ENCODE measurements at regions of chr17 and their contacts with region 1.

Region 1: GRCh38 chr17:72397687-72398086 is 276.9 kb downstream of the SOX9 start:
- DNase-seq: no peak
- H3K4me3 ChIP-seq: no peak overlapping the region
- H3K4me3 Mint-ChIP-seq: peak overlapping the region; percentile 4
- H3K27ac Mint-ChIP-seq: peak overlapping the region; percentile 40
- H3K4me1 ChIP-seq: peaks cover 38% of the 10 kb centered on the region
- H3K4me1 Mint-ChIP-seq: peaks cover 27% of the 10 kb centered on the region
- H3K27me3 ChIP-seq: no peaks in the 10 kb centered on the region
- H3K27me3 Mint-ChIP-seq: no peaks in the 10 kb centered on the region
- CTCF ChIP-seq: no peak

Region 2: GRCh38 chr17:72126563-72127486 is 270.9 kb before region 1 on chr17:
- CTCF ChIA-PET with region 1: no interaction called
- POLR2A ChIA-PET with region 1: no interaction called
- intact Hi-C with region 1: loop called (anchors 1 kb)
- DNase-seq: peak in 1 of 2 experiments; percentile 30
- H3K4me3 ChIP-seq: no peak overlapping the region
- H3K4me3 Mint-ChIP-seq: no peak overlapping the region
- H3K27ac Mint-ChIP-seq: no peak overlapping the region
- H3K4me1 ChIP-seq: peaks cover 21% of the 10 kb centered on the region
- H3K4me1 Mint-ChIP-seq: peaks cover 19% of the 10 kb centered on the region
- H3K27me3 ChIP-seq: no peaks in the 10 kb centered on the region
- H3K27me3 Mint-ChIP-seq: no peaks in the 10 kb centered on the region
- CTCF ChIP-seq: no peak

Region 3: DNA sequence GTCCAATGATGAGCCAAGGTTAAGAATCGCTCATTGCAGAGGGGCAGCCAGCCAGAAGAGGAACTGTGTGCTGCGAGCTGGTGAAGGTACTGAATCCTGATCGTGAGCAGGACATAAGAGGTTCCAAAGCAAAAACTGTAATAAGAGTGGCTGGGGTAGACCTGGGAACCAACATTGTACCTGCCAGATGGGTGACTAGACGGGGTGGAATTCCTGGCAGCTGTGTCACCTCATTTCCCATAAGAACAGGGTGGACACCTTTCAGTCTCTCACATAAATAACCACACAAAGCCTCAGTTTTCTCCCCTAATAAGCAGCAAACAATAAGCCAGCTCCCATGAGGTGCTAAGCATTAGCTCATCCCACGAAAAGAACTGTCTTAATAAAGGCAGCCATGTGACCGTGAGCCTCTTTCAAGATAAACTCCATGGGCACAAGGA is 13.5 kb after region 1 on chr17:
- CTCF ChIA-PET with region 1: interaction called, 3 read pairs
- POLR2A ChIA-PET with region 1: no interaction called
- intact Hi-C with region 1: loop called (anchors 1 kb)
- DNase-seq: no peak
- H3K4me3 ChIP-seq: no peak overlapping the region
- H3K4me3 Mint-ChIP-seq: no peak overlapping the region
- H3K27ac Mint-ChIP-seq: peak overlapping the region; percentile 77
- H3K4me1 ChIP-seq: peaks cover 79% of the 10 kb centered on the region
- H3K4me1 Mint-ChIP-seq: peaks cover 50% of the 10 kb centered on the region
- H3K27me3 ChIP-seq: no peaks in the 10 kb centered on the region
- H3K27me3 Mint-ChIP-seq: no peaks in the 10 kb centered on the region
- CTCF ChIP-seq: no peak

Region 4: GRCh38 chr17:72421128-72422092 is 23.7 kb after region 1 on chr17:
- CTCF ChIA-PET with region 1: no interaction called
- POLR2A ChIA-PET with region 1: no interaction called
- intact Hi-C with region 1: loop called (anchors 2 kb)
- DNase-seq: peak; percentile 85 to 92
- H3K4me3 ChIP-seq: no peak overlapping the region
- H3K4me3 Mint-ChIP-seq: peak overlapping the region; percentile 29
- H3K27ac Mint-ChIP-seq: peak overlapping the region; percentile 97
- H3K4me1 ChIP-seq: peaks cover 43% of the 10 kb centered on the region
- H3K4me1 Mint-ChIP-seq: peaks cover 42% of the 10 kb centered on the region
- H3K27me3 ChIP-seq: no peaks in the 10 kb centered on the region
- H3K27me3 Mint-ChIP-seq: no peaks in the 10 kb centered on the region
- CTCF ChIP-seq: no peak

Region 5: GRCh38 chr17:72472106-72472505 is 74.4 kb after region 1 on chr17:
- CTCF ChIA-PET with region 1: no interaction called
- POLR2A ChIA-PET with region 1: no interaction called
- intact Hi-C with region 1: no loop called
- DNase-seq: no peak
- H3K4me3 ChIP-seq: no peak overlapping the region
- H3K4me3 Mint-ChIP-seq: no peak overlapping the region
- H3K27ac Mint-ChIP-seq: no peak overlapping the region
- H3K4me1 ChIP-seq: peaks cover 51% of the 10 kb centered on the region
- H3K4me1 Mint-ChIP-seq: peaks cover 11% of the 10 kb centered on the region
- H3K27me3 ChIP-seq: no peaks in the 10 kb centered on the region
- H3K27me3 Mint-ChIP-seq: no peaks in the 10 kb centered on the region
- CTCF ChIP-seq: no peak

Region 6: DNA sequence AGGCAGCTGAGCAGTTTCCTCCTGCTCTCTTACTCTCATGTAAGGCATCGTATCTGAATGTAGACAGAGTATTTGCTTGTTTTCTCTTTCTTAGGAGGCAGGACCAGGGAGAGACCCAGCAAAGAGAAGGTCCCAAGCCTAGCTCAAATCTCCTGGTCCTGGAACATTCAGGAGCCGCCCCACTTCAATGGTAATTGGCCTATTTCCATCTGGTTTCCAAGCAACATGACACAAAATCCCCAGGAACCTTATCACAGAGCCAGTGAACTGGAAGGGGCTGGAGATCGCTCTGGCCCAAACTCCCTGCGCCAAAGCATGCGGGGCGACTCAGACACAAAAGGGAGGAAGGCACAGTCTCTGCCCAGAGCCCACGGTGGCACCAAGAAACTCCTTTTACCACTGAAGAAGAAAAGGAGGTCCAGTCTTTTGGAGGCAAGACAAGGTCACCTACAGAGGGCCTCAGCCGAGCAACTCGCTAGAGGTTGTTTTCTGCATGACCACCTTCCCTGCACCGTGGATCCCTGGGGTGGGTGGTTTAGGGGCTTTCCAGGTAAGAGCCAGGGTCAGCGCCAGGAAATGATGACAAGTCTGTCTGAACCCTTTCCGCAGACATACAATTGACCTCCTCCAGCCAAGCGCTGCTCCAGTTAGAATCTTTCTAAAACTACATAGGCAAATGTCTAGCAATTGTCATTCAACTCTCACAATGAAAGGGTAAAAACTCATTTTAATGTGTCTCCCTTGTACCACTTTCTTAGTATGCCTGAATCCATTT is 117.8 kb after region 1 on chr17:
- CTCF ChIA-PET with region 1: no interaction called
- POLR2A ChIA-PET with region 1: interaction called, 4 read pairs
- intact Hi-C with region 1: loop called (anchors 1 kb)
- DNase-seq: no peak
- H3K4me3 ChIP-seq: no peak overlapping the region
- H3K4me3 Mint-ChIP-seq: no peak overlapping the region
- H3K27ac Mint-ChIP-seq: no peak overlapping the region
- H3K4me1 ChIP-seq: peaks cover 46% of the 10 kb centered on the region
- H3K4me1 Mint-ChIP-seq: peaks cover 27% of the 10 kb centered on the region
- H3K27me3 ChIP-seq: no peaks in the 10 kb centered on the region
- H3K27me3 Mint-ChIP-seq: no peaks in the 10 kb centered on the region
- CTCF ChIP-seq: no peak